HepG2 (cell line): ENCODE measurements at regions of chr1 and their contacts with region 1.

Region 1: GRCh38 chr1:45303582-45304310 is 22.9 kb upstream of the HPDL start:
- DNase-seq: peak; percentile 92
- ATAC-seq: peak; percentile 87
- H3K4me3 ChIP-seq: peak overlapping the region; percentile 73 to 77 (median 75)
- H3K27ac ChIP-seq: peak overlapping the region; percentile 90
- H3K4me1 ChIP-seq: peaks cover 54% of the 10 kb centered on the region
- H3K27me3 ChIP-seq: no peaks in the 10 kb centered on the region
- CTCF ChIP-seq: peak; percentile 98
- EP300 ChIP-seq: peak in 1 of 2 experiments; percentile 1; a peak in 1 of 4 replicates
- POLR2A ChIP-seq: peak; percentile 81 to 94
- RAD21 ChIP-seq: peak; percentile 97

Region 2: DNA sequence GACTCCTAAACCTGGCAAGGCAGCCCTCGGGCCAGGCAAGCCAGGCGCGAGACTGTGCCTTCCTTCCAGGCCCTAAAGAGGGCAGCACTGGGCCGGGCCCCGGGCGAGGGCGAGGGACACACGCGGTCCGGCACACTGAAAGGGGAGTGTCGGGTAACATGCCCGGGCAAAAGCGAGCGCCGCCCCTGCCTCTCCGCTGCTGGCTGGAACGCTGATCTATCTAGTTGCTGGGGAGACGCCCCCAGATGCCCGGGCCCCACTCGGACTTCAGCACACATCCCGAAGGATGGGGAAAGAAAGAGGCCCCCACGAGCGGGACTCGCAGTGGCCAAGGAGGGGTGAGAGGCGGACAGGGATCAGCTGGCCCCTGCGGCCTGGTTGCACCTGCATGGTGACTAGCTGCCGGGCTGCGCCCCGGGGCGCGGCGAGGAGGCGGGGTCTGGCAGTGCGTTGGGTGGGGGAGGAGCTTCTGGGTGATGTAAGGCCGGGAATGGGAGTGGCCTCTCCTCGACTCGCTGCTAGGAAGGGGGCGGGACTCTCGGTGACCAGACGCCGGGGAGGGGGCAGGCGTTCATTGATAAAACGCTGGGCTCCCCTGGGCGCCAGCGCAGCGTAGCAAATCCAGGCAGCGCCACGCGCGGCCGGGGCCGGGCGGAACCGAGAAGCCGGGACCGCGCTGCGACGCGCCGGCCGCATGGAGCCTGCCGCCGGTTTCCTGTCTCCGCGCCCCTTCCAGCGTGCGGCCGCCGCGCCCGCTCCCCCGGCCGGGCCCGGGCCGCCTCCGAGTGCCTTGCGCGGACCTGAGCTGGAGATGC is 503.8 kb before region 1 on chr1 and contains the start of gene PLK3:
- CTCF ChIA-PET with region 1: no interaction called
- POLR2A ChIA-PET with region 1: interaction called, 11 read pairs
- in situ Hi-C with region 1: no loop called
- intact Hi-C with region 1: no loop called
- DNase-seq: peak; percentile 92
- ATAC-seq: peak; percentile 86
- H3K4me3 ChIP-seq: peak within 1 kb of the TSS; percentile 69 to 91 (median 90)
- H3K27ac ChIP-seq: peak within 1 kb of the TSS; percentile 94
- H3K4me1 ChIP-seq: peaks cover 44% of the 10 kb centered on the region
- H3K27me3 ChIP-seq: no peaks in the 10 kb centered on the region
- CTCF ChIP-seq: peak; percentile 98
- EP300 ChIP-seq: peak; percentile 13 to 54; a peak in 1 of 4 replicates
- POLR2A ChIP-seq: peak in 1 of 2 experiments; percentile 92; a peak in 2 of 4 replicates
- RAD21 ChIP-seq: peak; percentile 92
- total RNA-seq, gene PLK3: 4.5 and 9.8 TPM in 2 replicates

Region 3: GRCh38 chr1:44835738-44836675 is 467.7 kb before region 1 on chr1:
- CTCF ChIA-PET with region 1: no interaction called
- POLR2A ChIA-PET with region 1: no interaction called
- in situ Hi-C with region 1: loop called (anchors 10 kb)
- intact Hi-C with region 1: no loop called
- DNase-seq: peak; percentile 65
- ATAC-seq: peak; percentile 70
- H3K4me3 ChIP-seq: peak overlapping the region in 1 of 3 experiments; percentile 26; a peak in 1 of 6 replicates
- H3K27ac ChIP-seq: no peak overlapping the region
- H3K4me1 ChIP-seq: peaks cover 60% of the 10 kb centered on the region
- H3K27me3 ChIP-seq: peaks cover 0 to 16% of the 10 kb centered on the region in 2 experiments; a peak in 1 of 5 replicates
- CTCF ChIP-seq: peak; percentile 91
- EP300 ChIP-seq: no peak
- POLR2A ChIP-seq: no peak
- RAD21 ChIP-seq: peak; percentile 71; the same call in 1 of the 2 replicates

Region 4: DNA sequence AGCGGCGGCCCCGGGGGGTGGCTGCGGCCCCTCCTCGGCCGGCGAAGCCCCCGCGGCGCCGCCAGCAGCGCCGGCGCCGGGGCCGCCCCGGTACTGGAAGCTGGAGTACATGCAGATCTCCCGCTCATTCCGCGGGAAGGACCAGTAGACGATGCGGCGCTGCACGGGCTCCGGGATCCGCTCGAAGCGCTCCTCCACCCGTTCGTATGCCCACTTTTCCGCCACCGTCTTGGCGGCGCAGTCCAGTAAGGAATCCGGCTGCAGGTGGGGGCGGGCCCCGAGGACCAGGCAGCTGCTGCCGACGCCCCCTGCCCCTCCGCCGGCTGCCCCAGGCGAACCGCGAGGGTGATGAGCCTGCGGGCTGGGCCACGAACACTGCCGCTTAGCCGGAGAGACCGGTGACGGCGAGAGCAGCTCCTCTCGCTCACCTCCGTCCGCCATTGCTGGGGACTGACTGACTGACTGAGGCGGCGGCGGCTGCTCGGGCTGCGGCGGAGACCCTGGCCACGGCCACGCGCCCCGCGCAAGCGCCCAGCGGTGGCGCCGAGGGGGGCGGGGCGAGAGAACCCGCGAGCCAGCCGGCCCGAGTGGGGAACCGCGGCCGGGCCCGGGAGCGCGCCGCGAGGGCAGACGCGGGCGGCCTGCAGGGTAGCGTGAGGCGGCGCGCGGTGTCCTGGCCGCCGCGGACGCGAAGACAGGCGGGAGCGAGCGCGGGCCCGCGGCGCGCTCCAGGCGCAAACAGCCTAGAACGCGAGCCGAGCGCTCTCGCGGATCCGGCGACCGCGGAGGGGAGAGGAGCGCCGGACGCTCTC is 97.6 kb before region 1 on chr1 and contains the start of gene ZSWIM5:
- CTCF ChIA-PET with region 1: no interaction called
- POLR2A ChIA-PET with region 1: interaction called, 8 read pairs
- in situ Hi-C with region 1: no loop called
- intact Hi-C with region 1: loop called (anchors 2 kb)
- DNase-seq: peak; percentile 48
- ATAC-seq: peak; percentile 87
- H3K4me3 ChIP-seq: peak within 1 kb of the TSS; percentile 88 to 96 (median 95)
- H3K27ac ChIP-seq: peak within 1 kb of the TSS; percentile 95
- H3K4me1 ChIP-seq: peaks cover 43% of the 10 kb centered on the region
- H3K27me3 ChIP-seq: no peaks in the 10 kb centered on the region; a peak in 1 of 5 replicates
- CTCF ChIP-seq: peak; percentile 23; the same call in 1 of the 2 replicates
- EP300 ChIP-seq: no peak
- POLR2A ChIP-seq: peak; percentile 78 to 84
- RAD21 ChIP-seq: peak; percentile 70
- total RNA-seq, gene ZSWIM5: 11.0 and 13.5 TPM in 2 replicates

Region 5: DNA sequence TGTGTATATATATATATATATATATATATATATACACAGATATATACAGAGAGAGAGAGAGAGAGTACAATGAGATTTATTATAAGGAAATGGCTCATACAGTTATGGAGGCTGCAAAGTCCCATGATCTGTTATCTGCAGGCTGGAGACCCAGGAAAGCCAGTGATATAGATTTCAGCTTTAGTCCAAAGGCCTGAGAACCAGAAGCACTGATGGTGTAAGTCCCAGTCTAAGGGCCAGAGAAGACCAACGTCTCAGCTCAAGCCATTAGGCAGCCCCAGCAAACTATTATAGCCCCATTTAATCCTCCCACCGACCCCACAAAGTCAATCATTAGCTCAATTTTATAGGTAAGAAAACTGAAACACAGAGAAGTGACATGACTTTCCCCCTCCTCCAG is 12.0 kb before region 1 on chr1:
- CTCF ChIA-PET with region 1: no interaction called
- POLR2A ChIA-PET with region 1: interaction called, 15 read pairs
- in situ Hi-C with region 1: no loop called
- intact Hi-C with region 1: no loop called
- DNase-seq: no peak
- ATAC-seq: no peak
- H3K4me3 ChIP-seq: no peak overlapping the region
- H3K27ac ChIP-seq: no peak overlapping the region
- H3K4me1 ChIP-seq: peaks cover 32% of the 10 kb centered on the region
- H3K27me3 ChIP-seq: no peaks in the 10 kb centered on the region
- CTCF ChIP-seq: no peak
- EP300 ChIP-seq: no peak
- POLR2A ChIP-seq: no peak
- RAD21 ChIP-seq: no peak

Region 6: DNA sequence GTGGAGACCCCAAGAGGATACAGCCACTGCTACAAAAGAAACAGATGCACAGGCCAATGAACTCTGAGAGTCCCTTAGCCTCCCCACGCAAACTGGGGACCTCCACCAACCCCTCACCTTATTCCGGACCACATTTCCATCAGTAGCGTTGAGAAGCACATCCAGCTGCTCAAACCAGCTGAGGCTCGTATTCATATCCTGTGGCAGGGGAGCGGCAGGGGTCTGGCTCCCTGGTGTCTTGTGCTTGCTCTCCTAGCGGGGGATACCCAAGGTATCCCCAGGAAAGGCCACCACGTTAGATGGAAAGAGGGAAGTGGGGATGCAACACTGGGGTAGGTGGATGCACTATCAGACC is 195.6 kb after region 1 on chr1:
- CTCF ChIA-PET with region 1: no interaction called
- POLR2A ChIA-PET with region 1: interaction called, 13 read pairs
- in situ Hi-C with region 1: loop called (anchors 5 kb)
- intact Hi-C with region 1: no loop called
- DNase-seq: no peak
- ATAC-seq: no peak; the same call in 1 of the 3 replicates
- H3K4me3 ChIP-seq: peak overlapping the region; percentile 74 to 83 (median 77)
- H3K27ac ChIP-seq: peak overlapping the region; percentile 71
- H3K4me1 ChIP-seq: peaks cover 43% of the 10 kb centered on the region
- H3K27me3 ChIP-seq: no peaks in the 10 kb centered on the region; a peak in 1 of 5 replicates
- CTCF ChIP-seq: no peak
- EP300 ChIP-seq: no peak
- POLR2A ChIP-seq: no peak
- RAD21 ChIP-seq: no peak